Activated T-helper 1 cell treated with anti-CD3 and anti-CD28 coated beads, Interleukin-12 subunit alpha, Interleukin-12 subunit beta, Interleukin-2, Interleukin-4 antibody, amounts not matched to agents 30 ng/mL and 10 ng/mL and 1 ng/mL, durations not matched to agents 14 hours and 24 hours and 36 hours (primary cell): ENCODE measurements at regions of chr5 and their contacts with region 1.

Region 1: DNA sequence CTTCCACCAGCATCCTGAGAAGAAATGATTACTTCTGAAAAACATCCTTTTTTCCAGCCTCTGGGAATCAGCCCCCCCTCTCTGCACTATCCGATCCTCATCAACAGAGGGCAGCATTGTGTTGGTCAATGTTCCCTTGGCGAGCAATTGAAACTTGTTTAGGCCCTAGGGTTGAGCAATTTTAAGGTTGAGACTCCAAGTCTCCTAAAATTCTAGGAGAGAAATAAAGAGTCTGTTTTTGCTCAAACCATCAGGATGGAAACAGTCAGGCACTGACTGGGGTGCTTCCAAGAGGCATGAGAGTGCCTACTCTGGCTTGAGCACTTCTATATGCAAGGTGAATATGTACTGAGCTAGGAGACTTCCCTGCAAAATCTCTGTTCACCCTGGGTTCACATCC is 12.4 kb upstream of the CYFIP2 start:
- DNase-seq: no peak
- H3K4me3 Mint-ChIP-seq: peak overlapping the region; percentile 68
- H3K27ac Mint-ChIP-seq: peak overlapping the region; percentile 97
- H3K4me1 Mint-ChIP-seq: peaks cover 93% of the 10 kb centered on the region
- H3K27me3 Mint-ChIP-seq: no peaks in the 10 kb centered on the region

Region 2: DNA sequence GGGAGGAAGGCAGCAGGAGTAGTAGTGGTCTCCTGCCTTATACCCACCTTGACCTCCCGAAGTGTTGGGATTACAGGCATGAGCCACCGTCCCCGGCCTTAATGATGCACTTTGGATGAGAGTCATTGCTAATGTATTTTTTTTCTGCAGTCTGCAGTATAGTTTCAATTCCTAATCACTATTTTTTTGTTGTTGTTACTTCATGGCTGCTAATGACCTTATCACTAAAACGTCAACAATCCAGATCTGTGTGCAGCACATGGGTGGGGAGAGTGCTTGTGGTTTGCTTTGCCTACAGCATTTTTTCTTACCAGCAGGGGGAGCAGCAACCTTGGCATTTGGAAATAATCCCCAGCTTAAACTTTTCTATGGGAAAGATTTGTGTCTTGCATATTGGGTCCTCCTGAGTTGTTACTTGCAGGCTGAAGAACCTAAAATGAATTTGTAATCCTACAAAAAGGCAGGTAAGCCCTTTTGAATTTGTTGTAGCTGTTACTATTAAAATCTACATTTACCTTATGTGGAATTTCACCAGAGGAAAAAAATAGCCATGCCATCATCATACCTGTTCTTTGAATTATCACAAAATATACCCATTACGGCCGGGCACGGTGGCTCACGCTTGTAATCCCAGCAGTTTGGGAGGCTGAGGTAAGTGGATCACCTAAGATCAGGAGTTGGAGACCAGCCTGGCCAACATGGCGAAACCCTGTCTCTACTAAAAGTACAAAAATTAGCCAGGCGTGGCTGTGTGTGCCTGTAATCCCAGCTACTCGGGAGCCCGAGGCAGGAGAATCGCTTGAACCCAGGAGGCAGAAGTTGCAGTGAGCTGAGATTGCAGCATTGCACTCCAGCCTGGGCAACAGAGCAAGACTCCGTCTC is 104.6 kb before region 1 on chr5:
- intact Hi-C with region 1: loop called (anchors 1 kb)
- DNase-seq: peak; percentile 74
- H3K4me3 Mint-ChIP-seq: no peak overlapping the region
- H3K27ac Mint-ChIP-seq: peak overlapping the region; percentile 67
- H3K4me1 Mint-ChIP-seq: peaks cover 43% of the 10 kb centered on the region
- H3K27me3 Mint-ChIP-seq: no peaks in the 10 kb centered on the region

Region 3: GRCh38 chr5:157180374-157181264 is 72.9 kb before region 1 on chr5 and contains the start of gene ITK:
- intact Hi-C with region 1: loop called (anchors 1 kb)
- DNase-seq: peak; percentile 52
- H3K4me3 Mint-ChIP-seq: peak within 1 kb of the TSS; percentile 100
- H3K27ac Mint-ChIP-seq: peak within 1 kb of the TSS; percentile 100
- H3K4me1 Mint-ChIP-seq: peaks cover 57% of the 10 kb centered on the region
- H3K27me3 Mint-ChIP-seq: no peaks in the 10 kb centered on the region
- total RNA-seq, gene ITK: 251 and 259 TPM in 2 replicates

Region 4: DNA sequence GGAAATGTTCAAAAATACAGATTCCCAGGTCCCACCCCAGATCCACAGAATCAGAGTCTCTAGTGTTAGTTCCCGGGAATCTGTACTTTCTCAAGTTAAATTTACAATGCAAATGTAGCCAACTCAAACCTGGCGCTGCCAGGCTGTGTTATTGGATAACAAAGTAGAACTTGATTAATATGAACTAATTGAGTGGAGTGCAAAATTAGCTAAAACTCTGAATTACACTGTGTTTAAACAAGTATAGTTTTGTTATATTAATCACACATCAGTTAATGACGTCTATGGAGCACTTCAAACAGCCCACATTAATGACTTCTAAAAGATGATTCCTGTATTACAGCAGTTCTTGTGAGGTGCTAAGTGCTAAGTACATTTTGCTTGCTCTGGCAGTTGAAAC is 20.0 kb before region 1 on chr5:
- intact Hi-C with region 1: no loop called
- DNase-seq: no peak
- H3K4me3 Mint-ChIP-seq: no peak overlapping the region
- H3K27ac Mint-ChIP-seq: peak overlapping the region; percentile 46
- H3K4me1 Mint-ChIP-seq: peaks cover 37% of the 10 kb centered on the region
- H3K27me3 Mint-ChIP-seq: no peaks in the 10 kb centered on the region

Region 5: DNA sequence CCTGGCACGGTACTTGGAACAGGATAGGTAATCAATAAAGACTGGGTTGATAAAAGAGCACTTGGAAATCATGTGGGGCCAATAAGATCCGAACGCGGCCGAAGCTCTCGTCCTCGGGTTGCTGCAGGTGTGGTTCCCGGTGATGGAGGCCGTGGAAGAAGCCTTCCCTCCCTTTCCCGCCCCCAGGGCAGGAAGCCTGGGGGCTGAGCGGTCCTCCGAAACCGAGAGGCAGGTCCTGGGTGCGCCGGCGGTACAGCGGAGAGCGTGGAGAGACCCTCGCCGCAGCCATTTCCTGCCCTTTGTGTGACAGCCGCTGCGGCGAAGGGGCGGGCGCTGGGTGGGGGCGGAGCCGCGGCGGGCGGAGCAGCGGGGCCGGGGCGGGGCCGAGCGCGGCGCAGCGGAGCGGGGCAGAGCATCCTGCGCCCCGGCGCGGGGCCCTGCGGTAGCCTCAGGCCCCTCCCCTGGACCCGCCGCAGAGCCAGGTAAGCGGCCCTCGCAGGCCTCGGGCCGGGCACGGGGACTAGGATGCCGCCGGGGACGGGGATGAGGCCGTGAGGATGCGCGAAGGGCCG is 12.3 kb after region 1 on chr5 and contains the start of gene CYFIP2:
- intact Hi-C with region 1: loop called (anchors 1 kb)
- DNase-seq: peak; percentile 82
- H3K4me3 Mint-ChIP-seq: peak within 1 kb of the TSS; percentile 93
- H3K27ac Mint-ChIP-seq: peak within 1 kb of the TSS; percentile 95
- H3K4me1 Mint-ChIP-seq: peaks cover 78% of the 10 kb centered on the region
- H3K27me3 Mint-ChIP-seq: no peaks in the 10 kb centered on the region
- total RNA-seq, gene CYFIP2: 173 and 175 TPM in 2 replicates

Region 6: GRCh38 chr5:157271740-157272271 is 18.3 kb after region 1 on chr5:
- intact Hi-C with region 1: loop called (anchors 1 kb)
- DNase-seq: peak; percentile 85
- H3K4me3 Mint-ChIP-seq: peak overlapping the region; percentile 74
- H3K27ac Mint-ChIP-seq: peak overlapping the region; percentile 100
- H3K4me1 Mint-ChIP-seq: peaks cover 96% of the 10 kb centered on the region
- H3K27me3 Mint-ChIP-seq: no peaks in the 10 kb centered on the region

Region 7: GRCh38 chr5:157306692-157307471 is 53.3 kb after region 1 on chr5:
- intact Hi-C with region 1: loop called (anchors 1 kb)
- DNase-seq: no peak
- H3K4me3 Mint-ChIP-seq: peak overlapping the region; percentile 42
- H3K27ac Mint-ChIP-seq: peak overlapping the region; percentile 88
- H3K4me1 Mint-ChIP-seq: peaks cover 68% of the 10 kb centered on the region
- H3K27me3 Mint-ChIP-seq: no peaks in the 10 kb centered on the region

Region 8: GRCh38 chr5:157312492-157312891 is 58.9 kb after region 1 on chr5:
- intact Hi-C with region 1: loop called (anchors 1 kb)
- DNase-seq: peak; percentile 49
- H3K4me3 Mint-ChIP-seq: no peak overlapping the region
- H3K27ac Mint-ChIP-seq: peak overlapping the region; percentile 87
- H3K4me1 Mint-ChIP-seq: peaks cover 29% of the 10 kb centered on the region
- H3K27me3 Mint-ChIP-seq: no peaks in the 10 kb centered on the region